Common myeloid progenitor, CD34-positive (primary cell): ENCODE measurements at regions of chr2 and their contacts with region 1.

Region 1: DNA sequence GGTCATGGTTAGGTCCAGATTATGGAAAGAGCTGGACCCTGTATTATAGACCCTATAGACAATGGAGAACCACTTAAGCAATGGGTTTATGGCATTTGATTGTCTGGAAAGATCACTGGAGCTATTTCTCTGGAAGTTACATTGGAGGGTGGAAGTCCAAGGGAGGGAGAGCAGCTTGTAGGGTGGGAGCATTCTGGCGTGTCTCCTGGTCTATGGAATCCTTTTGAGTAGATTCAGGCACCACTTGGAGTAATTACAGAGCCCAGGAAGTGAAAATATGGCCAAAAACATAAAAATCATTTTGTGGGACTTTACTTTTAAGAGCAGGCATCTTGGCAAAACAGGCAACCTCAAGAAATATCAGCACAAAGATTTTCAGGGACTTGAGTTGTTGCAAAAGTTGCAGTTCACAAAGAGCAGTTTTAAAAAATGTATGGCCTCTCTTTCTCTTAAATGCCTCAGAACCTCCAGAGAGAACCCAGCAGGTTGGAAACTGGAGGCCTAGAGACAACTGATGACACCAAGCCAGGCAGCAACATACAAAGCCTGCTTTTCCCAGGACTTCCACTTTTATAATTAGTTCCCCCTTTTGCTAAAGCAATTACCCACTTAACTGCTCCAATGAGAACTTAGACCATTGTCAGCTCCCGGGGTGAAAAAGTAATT is 331.0 kb downstream of the MYCN start:
- DNase-seq: peak in 1 of 3 donors; percentile 28
- H3K4me3 ChIP-seq: no peak overlapping the region
- H3K27ac ChIP-seq: no peak overlapping the region
- H3K4me1 ChIP-seq: peaks cover 0 to 5% (median 0%) of the 10 kb centered on the region in 4 experiments
- H3K27me3 ChIP-seq: no peaks in the 10 kb centered on the region

Region 2: GRCh38 chr2:16260041-16260830 is 11.1 kb before region 1 on chr2:
- CTCF ChIA-PET with region 1: interaction called, 13 read pairs
- POLR2A ChIA-PET with region 1: no interaction called
- DNase-seq: peak; percentile 29 to 62 (median 54)
- H3K4me3 ChIP-seq: no peak overlapping the region
- H3K27ac ChIP-seq: no peak overlapping the region
- H3K4me1 ChIP-seq: peaks cover 0 to 14% (median 5%) of the 10 kb centered on the region in 4 experiments
- H3K27me3 ChIP-seq: peaks cover 0 to 28% (median 0%) of the 10 kb centered on the region in 5 experiments

Region 3: GRCh38 chr2:16281451-16282336 is 10.3 kb after region 1 on chr2:
- CTCF ChIA-PET with region 1: interaction called, 26 read pairs
- POLR2A ChIA-PET with region 1: interaction called, 3 read pairs
- DNase-seq: peak; percentile 59 to 72 (median 71)
- H3K4me3 ChIP-seq: peak overlapping the region in 3 of 7 experiments; percentile 9 to 54 (median 27)
- H3K27ac ChIP-seq: no peak overlapping the region
- H3K4me1 ChIP-seq: peaks cover 0 to 29% (median 21%) of the 10 kb centered on the region in 4 experiments
- H3K27me3 ChIP-seq: no peaks in the 10 kb centered on the region

Region 4: DNA sequence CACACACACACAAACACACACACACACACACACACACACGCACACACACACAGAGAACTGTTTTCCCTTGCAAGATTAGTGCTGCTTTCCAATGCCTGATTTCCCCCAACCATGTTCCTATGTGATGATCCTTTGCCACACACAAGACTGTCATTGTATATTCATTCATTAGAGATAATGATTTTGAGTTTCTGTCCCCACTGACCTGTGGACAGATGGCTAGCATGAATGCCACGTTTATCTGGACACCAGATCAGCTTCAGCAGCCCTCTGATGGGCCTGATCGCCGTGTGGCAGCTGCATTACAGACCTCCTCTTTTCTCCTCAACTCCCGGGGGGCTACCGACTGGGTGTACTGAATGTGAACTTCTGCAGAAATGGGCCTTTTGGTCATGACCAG is 22.0 kb after region 1 on chr2:
- CTCF ChIA-PET with region 1: no interaction called
- POLR2A ChIA-PET with region 1: no interaction called
- DNase-seq: no peak
- H3K4me3 ChIP-seq: no peak overlapping the region
- H3K27ac ChIP-seq: no peak overlapping the region
- H3K4me1 ChIP-seq: no peaks in the 10 kb centered on the region
- H3K27me3 ChIP-seq: no peaks in the 10 kb centered on the region